Aorta (tissue), 5 donors: ENCODE measurements at regions of chr2 and their contacts with region 1.

Region 1: DNA sequence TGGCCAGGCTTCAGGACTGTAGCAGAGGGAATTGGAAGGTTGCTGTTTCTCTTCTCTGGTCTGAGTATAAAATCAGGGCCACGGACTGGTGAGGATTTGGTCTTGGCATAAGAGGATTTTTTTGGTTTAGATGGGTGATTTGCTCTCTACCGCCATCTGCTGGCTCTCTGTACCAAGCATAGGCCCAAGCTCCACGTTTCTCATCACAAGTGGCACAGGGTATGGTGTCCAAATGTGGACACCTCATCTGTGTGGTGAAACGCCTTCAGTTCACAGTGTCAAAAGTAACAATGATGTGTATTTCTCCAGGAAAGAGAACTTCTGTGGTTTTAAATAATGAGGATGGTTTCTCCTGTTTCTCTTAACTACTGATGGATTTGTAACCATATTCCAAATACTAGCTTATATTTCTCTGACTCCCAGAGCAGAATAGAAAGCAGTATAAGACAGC is 115.1 kb downstream of the EML6 start:
- DNase-seq: peak; percentile 60 to 85
- ATAC-seq: peak; percentile 85
- H3K4me3 ChIP-seq: no peak overlapping the region
- H3K27ac ChIP-seq: no peak overlapping the region
- H3K4me1 ChIP-seq: no peaks in the 10 kb centered on the region
- H3K27me3 ChIP-seq: no peaks in the 10 kb centered on the region

Region 2: GRCh38 chr2:54106631-54107454 is 731.8 kb before region 1 on chr2:
- intact Hi-C with region 1: loop called in 1 of 2 experiments (anchors 5 kb)
- DNase-seq: no peak
- ATAC-seq: peak; percentile 78
- H3K4me3 ChIP-seq: no peak overlapping the region
- H3K27ac ChIP-seq: no peak overlapping the region
- H3K4me1 ChIP-seq: no peaks in the 10 kb centered on the region
- H3K27me3 ChIP-seq: no peaks in the 10 kb centered on the region

Region 3: GRCh38 chr2:54522624-54523281 is 315.9 kb before region 1 on chr2:
- intact Hi-C with region 1: loop called in 1 of 2 experiments (anchors 10 kb)
- DNase-seq: no peak
- ATAC-seq: peak; percentile 76
- H3K4me3 ChIP-seq: no peak overlapping the region
- H3K27ac ChIP-seq: no peak overlapping the region
- H3K4me1 ChIP-seq: peaks cover 2 to 3% of the 10 kb centered on the region in 2 donors
- H3K27me3 ChIP-seq: no peaks in the 10 kb centered on the region

Region 4: GRCh38 chr2:54723131-54723995 is 115.2 kb before region 1 on chr2 and contains the start of gene EML6:
- intact Hi-C with region 1: loop called in 1 of 2 experiments (anchors 5 kb)
- DNase-seq: peak; percentile 99
- ATAC-seq: peak; percentile 100
- H3K4me3 ChIP-seq: peak within 1 kb of the TSS; percentile 70 to 72
- H3K27ac ChIP-seq: peak within 1 kb of the TSS in 1 of 2 donors; percentile 28
- H3K4me1 ChIP-seq: peaks cover 0 to 4% of the 10 kb centered on the region in 2 donors
- H3K27me3 ChIP-seq: no peaks in the 10 kb centered on the region
- total RNA-seq, gene EML6: 2.6 to 2.7 TPM

Region 5: DNA sequence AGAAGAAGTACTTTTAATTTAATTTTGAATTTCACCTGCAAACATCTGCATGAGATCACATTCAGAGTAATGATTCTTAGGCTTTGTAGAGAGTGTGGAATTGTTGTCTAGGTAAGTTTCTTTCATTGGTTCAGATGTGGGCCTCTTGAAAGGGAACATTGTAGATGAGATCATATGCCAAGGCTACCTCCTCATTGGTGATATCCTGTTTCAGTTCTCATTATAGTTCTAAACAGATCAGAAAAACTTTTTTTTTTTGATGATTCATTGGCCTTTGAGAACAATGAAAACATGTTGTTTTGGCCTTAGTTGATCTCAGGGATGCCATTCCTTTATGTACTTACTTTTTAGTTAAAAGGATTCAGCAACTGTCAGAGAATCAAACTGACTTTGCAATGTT is 70.7 kb before region 1 on chr2:
- intact Hi-C with region 1: no loop called
- DNase-seq: no peak
- ATAC-seq: no peak
- H3K4me3 ChIP-seq: no peak overlapping the region
- H3K27ac ChIP-seq: no peak overlapping the region
- H3K4me1 ChIP-seq: no peaks in the 10 kb centered on the region
- H3K27me3 ChIP-seq: no peaks in the 10 kb centered on the region

Region 6: GRCh38 chr2:55590810-55591440 is 752.3 kb after region 1 on chr2:
- intact Hi-C with region 1: no loop called
- DNase-seq: no peak
- ATAC-seq: no peak
- H3K4me3 ChIP-seq: no peak overlapping the region
- H3K27ac ChIP-seq: no peak overlapping the region
- H3K4me1 ChIP-seq: peaks cover 0 to 4% of the 10 kb centered on the region in 2 donors
- H3K27me3 ChIP-seq: no peaks in the 10 kb centered on the region